ENCODE measurements at regions of chr1 and their contacts with region 1.

Region 1: GRCh38 chr1:113928941-113929749 is at the start of gene HIPK1:
- DNase-seq: peak; percentile 88 to 97 (median 93)
- ATAC-seq: peak; percentile 69
- H3K4me3 ChIP-seq: peak within 1 kb of the TSS; percentile 100
- H3K4me3 Mint-ChIP-seq: peak within 1 kb of the TSS; percentile 96 to 100 (median 99)
- H3K27ac ChIP-seq: peak within 1 kb of the TSS; percentile 99
- H3K27ac Mint-ChIP-seq: peak within 1 kb of the TSS; percentile 93 to 100 (median 100)
- H3K4me1 ChIP-seq: peaks cover 41 to 46% of the 10 kb centered on the region in 2 donors
- H3K4me1 Mint-ChIP-seq: peaks cover 41 to 56% (median 48%) of the 10 kb centered on the region in 7 donors
- H3K27me3 ChIP-seq: no peaks in the 10 kb centered on the region
- H3K27me3 Mint-ChIP-seq: peaks cover 0 to 12% (median 0%) of the 10 kb centered on the region in 5 donors
- total RNA-seq, gene HIPK1: 95.8 to 211 (median 124) TPM

Region 2: DNA sequence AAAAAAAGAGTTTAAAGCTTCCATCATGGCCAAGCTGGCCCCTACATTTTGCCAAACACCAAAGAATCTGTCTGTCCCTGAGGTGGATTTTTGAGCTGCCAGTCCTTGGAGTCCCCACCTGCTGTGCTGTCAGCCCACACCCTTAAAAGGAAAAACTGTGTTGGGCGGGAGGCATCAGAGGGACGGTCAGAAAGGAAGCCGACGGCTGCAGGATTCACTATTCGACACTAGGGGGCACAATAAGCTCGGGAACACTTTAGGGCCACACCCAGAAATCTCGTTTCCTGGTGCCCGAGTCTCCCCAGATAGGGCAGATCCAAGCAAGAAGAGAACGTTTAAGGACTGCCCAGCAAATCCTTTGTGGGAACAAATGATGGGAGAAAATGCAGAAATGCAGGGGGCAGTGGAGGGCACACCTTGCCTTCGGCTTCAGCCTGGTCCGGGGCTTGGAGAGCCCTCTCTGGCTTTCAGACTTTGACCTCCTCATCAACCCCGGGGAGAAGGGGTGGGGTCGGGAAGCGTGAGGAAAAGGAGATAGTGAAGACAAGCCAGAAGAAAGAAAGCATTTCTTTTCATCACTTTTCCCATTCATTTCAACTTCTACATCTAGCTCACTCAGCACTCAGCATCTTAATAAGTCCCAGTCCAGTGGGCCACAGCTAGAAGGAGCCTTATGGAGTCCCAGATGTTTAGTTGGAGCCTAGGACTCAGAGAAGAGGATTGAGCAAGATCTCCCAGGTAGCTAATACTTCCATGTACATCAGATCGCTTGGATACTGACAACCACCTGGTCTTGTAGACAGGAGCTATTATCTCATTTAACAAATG is 1538.2 kb before region 1 on chr1:
- CTCF ChIA-PET with region 1: no interaction called
- POLR2A ChIA-PET with region 1: no interaction called
- intact Hi-C with region 1: loop called in 1 of 2 experiments (anchors 10 kb)
- DNase-seq: peak; percentile 49 to 78 (median 75)
- ATAC-seq: peak; percentile 90
- H3K4me3 ChIP-seq: no peak overlapping the region
- H3K4me3 Mint-ChIP-seq: peak overlapping the region in 5 of 10 donors; percentile 7 to 78 (median 54)
- H3K27ac ChIP-seq: no peak overlapping the region
- H3K27ac Mint-ChIP-seq: peak overlapping the region in 1 of 9 donors; percentile 62
- H3K4me1 ChIP-seq: peaks cover 7 to 9% of the 10 kb centered on the region in 2 donors
- H3K4me1 Mint-ChIP-seq: peaks cover 7 to 34% (median 15%) of the 10 kb centered on the region in 7 donors
- H3K27me3 ChIP-seq: no peaks in the 10 kb centered on the region
- H3K27me3 Mint-ChIP-seq: peaks cover 9 to 50% (median 39%) of the 10 kb centered on the region in 5 donors

Region 3: GRCh38 chr1:113415310-113416070 is 513.7 kb before region 1 on chr1:
- CTCF ChIA-PET with region 1: no interaction called
- POLR2A ChIA-PET with region 1: no interaction called
- intact Hi-C with region 1: loop called in 1 of 2 experiments (anchors 10 kb)
- DNase-seq: peak in 5 of 9 donors; percentile 1 to 27 (median 10)
- ATAC-seq: no peak
- H3K4me3 ChIP-seq: no peak overlapping the region
- H3K4me3 Mint-ChIP-seq: no peak overlapping the region
- H3K27ac ChIP-seq: no peak overlapping the region
- H3K27ac Mint-ChIP-seq: peak overlapping the region in 5 of 9 donors; percentile 0 to 27 (median 1)
- H3K4me1 ChIP-seq: no peaks in the 10 kb centered on the region
- H3K4me1 Mint-ChIP-seq: peaks cover 0 to 5% (median 0%) of the 10 kb centered on the region in 7 donors
- H3K27me3 ChIP-seq: no peaks in the 10 kb centered on the region
- H3K27me3 Mint-ChIP-seq: no peaks in the 10 kb centered on the region

Region 4: GRCh38 chr1:113508364-113509164 is 420.6 kb before region 1 on chr1:
- CTCF ChIA-PET with region 1: no interaction called
- POLR2A ChIA-PET with region 1: no interaction called
- intact Hi-C with region 1: no loop called
- DNase-seq: no peak
- ATAC-seq: no peak
- H3K4me3 ChIP-seq: no peak overlapping the region
- H3K4me3 Mint-ChIP-seq: no peak overlapping the region
- H3K27ac ChIP-seq: no peak overlapping the region
- H3K27ac Mint-ChIP-seq: no peak overlapping the region
- H3K4me1 ChIP-seq: no peaks in the 10 kb centered on the region
- H3K4me1 Mint-ChIP-seq: peaks cover 0 to 3% (median 0%) of the 10 kb centered on the region in 7 donors
- H3K27me3 ChIP-seq: no peaks in the 10 kb centered on the region
- H3K27me3 Mint-ChIP-seq: no peaks in the 10 kb centered on the region

Region 5: DNA sequence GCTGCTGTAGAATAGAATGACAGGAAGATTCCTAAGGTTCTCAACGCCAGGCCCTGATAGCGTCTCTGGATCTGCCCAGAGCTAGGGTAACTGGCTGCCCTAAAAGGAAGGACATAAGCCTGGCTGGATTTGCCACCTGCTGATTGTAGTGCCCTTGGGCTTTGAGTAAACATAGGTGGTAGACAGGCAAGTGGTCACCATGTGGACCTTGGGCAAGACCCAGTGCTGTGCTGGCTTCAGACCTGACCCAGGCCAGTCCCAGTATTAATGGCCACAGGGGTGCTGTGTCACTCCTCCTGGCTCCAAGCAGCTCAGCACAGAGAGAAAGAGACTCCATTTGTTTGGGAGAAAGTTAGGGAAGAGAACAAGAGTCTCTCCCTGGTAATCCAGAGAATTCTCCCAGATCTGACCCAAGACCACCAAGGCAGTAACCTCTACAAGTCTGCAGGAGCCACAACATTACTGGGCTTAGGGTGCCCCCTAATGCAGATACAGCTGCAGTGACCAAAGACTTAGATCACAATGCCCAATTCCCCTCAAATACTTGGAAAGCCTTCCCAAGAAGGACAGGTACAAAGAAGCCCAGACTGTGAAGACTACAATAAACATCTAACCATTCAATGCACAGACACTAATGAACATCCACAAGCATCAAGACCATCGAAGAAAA is 214.4 kb before region 1 on chr1:
- CTCF ChIA-PET with region 1: no interaction called
- POLR2A ChIA-PET with region 1: no interaction called
- intact Hi-C with region 1: no loop called
- DNase-seq: no peak
- ATAC-seq: no peak
- H3K4me3 ChIP-seq: no peak overlapping the region
- H3K4me3 Mint-ChIP-seq: no peak overlapping the region
- H3K27ac ChIP-seq: no peak overlapping the region
- H3K27ac Mint-ChIP-seq: peak overlapping the region in 1 of 9 donors; percentile 2
- H3K4me1 ChIP-seq: no peaks in the 10 kb centered on the region
- H3K4me1 Mint-ChIP-seq: peaks cover 0 to 5% (median 0%) of the 10 kb centered on the region in 7 donors
- H3K27me3 ChIP-seq: no peaks in the 10 kb centered on the region
- H3K27me3 Mint-ChIP-seq: no peaks in the 10 kb centered on the region

Region 6: GRCh38 chr1:113871597-113872113 is 57.5 kb before region 1 on chr1 and contains the start of gene PTPN22:
- CTCF ChIA-PET with region 1: no interaction called
- POLR2A ChIA-PET with region 1: interaction called, 19 read pairs
- intact Hi-C with region 1: loop called (anchors 1 kb)
- DNase-seq: peak; percentile 41 to 91 (median 87)
- ATAC-seq: peak; percentile 98
- H3K4me3 ChIP-seq: peak within 1 kb of the TSS; percentile 81
- H3K4me3 Mint-ChIP-seq: peak within 1 kb of the TSS; percentile 82 to 95 (median 92)
- H3K27ac ChIP-seq: peak within 1 kb of the TSS; percentile 87
- H3K27ac Mint-ChIP-seq: peak within 1 kb of the TSS; percentile 94 to 99 (median 98)
- H3K4me1 ChIP-seq: peaks cover 30 to 65% of the 10 kb centered on the region in 2 donors
- H3K4me1 Mint-ChIP-seq: peaks cover 37 to 77% (median 72%) of the 10 kb centered on the region in 7 donors
- H3K27me3 ChIP-seq: no peaks in the 10 kb centered on the region
- H3K27me3 Mint-ChIP-seq: no peaks in the 10 kb centered on the region
- total RNA-seq, gene PTPN22: 22.2 to 76.7 (median 27.5) TPM

Region 7: GRCh38 chr1:113949007-113949406 is 19.9 kb after region 1 on chr1:
- CTCF ChIA-PET with region 1: interaction called, 21 read pairs
- POLR2A ChIA-PET with region 1: interaction called, 360 read pairs
- intact Hi-C with region 1: loop called (anchors 1 kb)
- DNase-seq: peak in 5 of 9 donors; percentile 16 to 53 (median 41)
- ATAC-seq: no peak
- H3K4me3 ChIP-seq: no peak overlapping the region
- H3K4me3 Mint-ChIP-seq: peak overlapping the region in 9 of 10 donors; percentile 36 to 88 (median 72)
- H3K27ac ChIP-seq: peak overlapping the region; percentile 73
- H3K27ac Mint-ChIP-seq: peak overlapping the region in 8 of 9 donors; percentile 92 to 99 (median 97)
- H3K4me1 ChIP-seq: peaks cover 42 to 68% of the 10 kb centered on the region in 2 donors
- H3K4me1 Mint-ChIP-seq: peaks cover 33 to 95% (median 85%) of the 10 kb centered on the region in 7 donors
- H3K27me3 ChIP-seq: no peaks in the 10 kb centered on the region
- H3K27me3 Mint-ChIP-seq: no peaks in the 10 kb centered on the region

Region 8: GRCh38 chr1:114511032-114511785 is 582.1 kb after region 1 on chr1 and contains the start of gene TRIM33:
- CTCF ChIA-PET with region 1: no interaction called
- POLR2A ChIA-PET with region 1: no interaction called
- intact Hi-C with region 1: loop called in 1 of 2 experiments (anchors 10 kb)
- DNase-seq: peak; percentile 91 to 95 (median 93)
- ATAC-seq: peak; percentile 89
- H3K4me3 ChIP-seq: peak within 1 kb of the TSS; percentile 71
- H3K4me3 Mint-ChIP-seq: peak within 1 kb of the TSS; percentile 86 to 99 (median 97)
- H3K27ac ChIP-seq: peak within 1 kb of the TSS; percentile 100
- H3K27ac Mint-ChIP-seq: peak within 1 kb of the TSS; percentile 98 to 100 (median 99)
- H3K4me1 ChIP-seq: peaks cover 22 to 29% of the 10 kb centered on the region in 2 donors
- H3K4me1 Mint-ChIP-seq: peaks cover 41 to 63% (median 52%) of the 10 kb centered on the region in 7 donors
- H3K27me3 ChIP-seq: no peaks in the 10 kb centered on the region
- H3K27me3 Mint-ChIP-seq: peaks cover 0 to 7% (median 0%) of the 10 kb centered on the region in 5 donors
- total RNA-seq, gene TRIM33: 43.8 to 57.6 (median 51.1) TPM